Heart left ventricle (tissue), 16 donors: ENCODE measurements at regions of chrX and their contacts with region 1.

Region 1: GRCh38 chrX:40013266-40014195 is 84.2 kb downstream of the BCOR start:
- DNase-seq: peak; percentile 76 to 81 (median 78)
- ATAC-seq: peak; percentile 60 to 80 (median 68)
- H3K4me3 ChIP-seq: peak overlapping the region; percentile 11 to 80 (median 59)
- H3K27ac ChIP-seq: peak overlapping the region; percentile 88 to 98 (median 94)
- H3K4me1 ChIP-seq: peaks cover 0 to 57% (median 16%) of the 10 kb centered on the region in 12 donors
- H3K27me3 ChIP-seq: peaks cover 0 to 71% (median 0%) of the 10 kb centered on the region in 9 donors
- CTCF ChIP-seq: peak in 1 of 12 donors; percentile 11
- POLR2A ChIP-seq: no peak

Region 2: DNA sequence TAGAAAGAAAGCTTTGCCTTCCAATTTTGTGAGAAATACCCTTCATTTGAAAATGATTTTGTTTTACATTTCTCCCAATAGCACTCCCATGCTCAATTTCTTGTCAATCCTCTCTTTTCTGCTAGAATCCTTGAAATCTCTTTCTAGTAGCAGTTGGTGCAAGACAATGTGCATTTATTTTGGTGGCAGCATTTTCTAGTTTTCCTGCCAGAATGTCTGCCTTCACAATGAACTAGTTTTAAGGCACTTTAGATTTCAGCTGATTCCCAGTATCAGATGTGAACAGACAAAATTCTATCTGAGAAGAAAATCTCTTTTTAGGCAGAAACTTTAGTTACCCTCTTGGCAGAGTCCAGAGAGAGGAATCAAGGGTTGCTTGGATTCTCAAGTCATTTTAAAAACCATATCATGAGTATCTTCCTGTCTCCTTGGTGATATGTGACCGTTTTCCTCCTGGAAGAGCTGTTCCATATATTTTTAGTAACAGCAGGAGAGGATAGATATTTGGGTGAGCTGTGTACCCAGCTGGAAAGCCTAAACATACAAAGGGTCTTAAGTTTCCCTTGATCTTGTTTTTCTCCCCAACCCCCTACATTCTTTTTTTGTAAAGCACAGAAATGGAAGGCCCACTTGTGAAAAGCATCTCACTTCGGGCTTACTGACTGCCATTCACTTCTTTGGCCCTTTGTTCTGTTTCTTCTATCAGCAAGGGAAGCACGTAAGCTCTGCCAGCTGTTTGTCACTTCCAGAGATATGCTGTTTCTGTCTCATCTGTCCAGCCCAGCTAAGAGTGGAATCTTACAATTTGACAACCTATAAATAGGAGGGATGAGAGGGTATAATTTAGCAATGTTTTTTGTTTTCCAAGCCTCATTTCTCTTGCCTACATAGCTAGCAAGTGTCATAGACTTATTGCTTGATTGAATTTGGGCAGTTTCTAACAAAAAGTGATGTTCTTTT is 1413.5 kb before region 1 on chrX:
- intact Hi-C with region 1: no loop called
- DNase-seq: no peak
- ATAC-seq: no peak
- H3K4me3 ChIP-seq: no peak overlapping the region
- H3K27ac ChIP-seq: no peak overlapping the region
- H3K4me1 ChIP-seq: peaks cover 0 to 8% (median 1%) of the 10 kb centered on the region in 12 donors
- H3K27me3 ChIP-seq: peaks cover 0 to 31% (median 0%) of the 10 kb centered on the region in 9 donors
- CTCF ChIP-seq: no peak
- POLR2A ChIP-seq: no peak

Region 3: GRCh38 chrX:39820938-39821708 is 192.4 kb before region 1 on chrX:
- intact Hi-C with region 1: loop called in 4 of 10 experiments (anchors 10 kb)
- DNase-seq: peak in 4 of 5 donors; percentile 25 to 62 (median 40)
- ATAC-seq: peak in 1 of 4 donors; percentile 68
- H3K4me3 ChIP-seq: peak overlapping the region; percentile 17 to 57 (median 48)
- H3K27ac ChIP-seq: peak overlapping the region in 2 of 12 donors; percentile 33 to 45
- H3K4me1 ChIP-seq: peaks cover 0 to 21% (median 5%) of the 10 kb centered on the region in 12 donors
- H3K27me3 ChIP-seq: peaks cover 0 to 60% (median 0%) of the 10 kb centered on the region in 9 donors
- CTCF ChIP-seq: no peak
- POLR2A ChIP-seq: no peak

Region 4: DNA sequence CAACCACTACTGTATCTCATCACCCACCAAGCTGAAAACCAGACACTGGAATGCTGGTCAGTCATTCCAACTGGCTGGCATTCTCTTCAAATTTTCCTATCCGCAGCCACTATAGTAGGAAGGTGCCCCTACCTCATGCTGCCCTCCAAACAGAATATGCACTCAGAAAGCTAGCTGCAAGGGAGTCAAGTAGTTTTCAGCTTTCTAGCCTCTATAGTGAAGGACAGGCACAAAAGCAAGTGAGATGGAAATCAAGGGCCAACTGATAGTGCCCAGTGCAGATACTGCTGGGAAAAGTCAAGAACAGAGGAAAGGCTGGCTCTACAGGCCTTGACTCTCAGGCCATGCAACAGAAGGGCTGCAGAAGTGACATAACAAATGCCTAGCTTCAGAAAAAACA is 37.0 kb after region 1 on chrX:
- intact Hi-C with region 1: loop called in 1 of 10 experiments (anchors 1 kb)
- DNase-seq: no peak
- ATAC-seq: no peak
- H3K4me3 ChIP-seq: no peak overlapping the region
- H3K27ac ChIP-seq: no peak overlapping the region
- H3K4me1 ChIP-seq: no peaks in the 10 kb centered on the region
- H3K27me3 ChIP-seq: no peaks in the 10 kb centered on the region
- CTCF ChIP-seq: no peak
- POLR2A ChIP-seq: no peak

Region 5: DNA sequence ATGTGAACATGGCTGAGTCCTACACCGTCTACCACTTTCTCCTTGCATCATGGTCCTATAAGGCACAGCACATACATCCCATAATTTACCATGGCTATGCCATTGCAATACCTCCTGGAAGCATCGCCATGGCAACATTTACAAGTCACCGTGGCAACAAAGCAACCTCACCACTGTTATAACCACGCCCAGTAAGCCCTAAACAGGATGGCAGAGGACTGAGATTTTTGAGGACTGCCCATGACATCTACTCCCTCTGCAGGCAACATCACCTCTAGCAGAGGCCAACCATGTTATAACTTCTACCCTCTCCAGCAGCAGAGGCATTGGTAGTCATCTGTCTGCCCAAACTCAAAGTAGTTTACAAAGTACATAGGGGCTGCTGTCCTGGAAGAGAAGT is 54.5 kb after region 1 on chrX:
- intact Hi-C with region 1: no loop called
- DNase-seq: no peak
- ATAC-seq: no peak
- H3K4me3 ChIP-seq: no peak overlapping the region
- H3K27ac ChIP-seq: no peak overlapping the region
- H3K4me1 ChIP-seq: peaks cover 0 to 8% (median 0%) of the 10 kb centered on the region in 12 donors
- H3K27me3 ChIP-seq: peaks cover 0 to 5% (median 0%) of the 10 kb centered on the region in 9 donors
- CTCF ChIP-seq: no peak
- POLR2A ChIP-seq: no peak

Region 6: DNA sequence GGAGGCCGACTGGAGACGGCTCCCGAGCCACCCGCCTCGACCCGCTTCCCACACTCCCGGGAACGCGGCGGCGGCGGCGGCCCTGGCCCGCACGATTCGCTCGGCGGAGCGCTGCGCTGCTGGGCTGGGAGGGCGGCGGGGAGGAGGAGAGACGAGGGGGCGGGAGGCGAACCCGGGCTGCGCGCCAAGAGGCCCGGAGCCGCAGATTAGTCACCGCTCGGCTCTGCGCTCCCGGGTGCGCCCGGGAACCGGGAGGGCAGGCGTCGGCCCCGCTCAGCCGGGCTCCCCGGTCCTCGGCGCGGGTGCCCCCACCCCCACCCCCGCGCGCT is 95.4 kb after region 1 on chrX:
- intact Hi-C with region 1: loop called in 3 of 10 experiments (anchors 5 kb)
- DNase-seq: peak; percentile 81 to 88 (median 85)
- ATAC-seq: peak; percentile 49 to 73 (median 68)
- H3K4me3 ChIP-seq: peak overlapping the region; percentile 41 to 88 (median 60)
- H3K27ac ChIP-seq: peak overlapping the region; percentile 81 to 97 (median 94)
- H3K4me1 ChIP-seq: peaks cover 0 to 63% (median 21%) of the 10 kb centered on the region in 12 donors
- H3K27me3 ChIP-seq: peaks cover 0 to 84% (median 0%) of the 10 kb centered on the region in 9 donors
- CTCF ChIP-seq: no peak
- POLR2A ChIP-seq: peak in 1 of 2 donors; percentile 34

Region 7: GRCh38 chrX:40175511-40176350 is 162.2 kb after region 1 on chrX:
- intact Hi-C with region 1: loop called in 3 of 10 experiments (anchors 5 to 10 kb)
- DNase-seq: peak; percentile 78 to 88 (median 82)
- ATAC-seq: peak; percentile 40 to 66 (median 62)
- H3K4me3 ChIP-seq: peak overlapping the region; percentile 35 to 79 (median 60)
- H3K27ac ChIP-seq: peak overlapping the region; percentile 84 to 99 (median 94)
- H3K4me1 ChIP-seq: peaks cover 0 to 41% (median 20%) of the 10 kb centered on the region in 12 donors
- H3K27me3 ChIP-seq: peaks cover 0 to 78% (median 0%) of the 10 kb centered on the region in 9 donors
- CTCF ChIP-seq: no peak
- POLR2A ChIP-seq: peak in 1 of 2 donors; percentile 31